ENCODE measurements at regions of chr9 and their contacts with region 1.

Region 1: GRCh38 chr9:36470643-36471290 is 70.7 kb upstream of the RNF38 start:
- DNase-seq: no peak
- ATAC-seq: peak; percentile 88
- H3K4me3 ChIP-seq: peak overlapping the region; percentile 6 to 43; a peak in 3 of 4 replicates
- H3K27ac ChIP-seq: peak overlapping the region; percentile 73
- H3K4me1 ChIP-seq: peaks cover 22% of the 10 kb centered on the region
- H3K27me3 ChIP-seq: no peaks in the 10 kb centered on the region
- CTCF ChIP-seq: no peak

Region 2: DNA sequence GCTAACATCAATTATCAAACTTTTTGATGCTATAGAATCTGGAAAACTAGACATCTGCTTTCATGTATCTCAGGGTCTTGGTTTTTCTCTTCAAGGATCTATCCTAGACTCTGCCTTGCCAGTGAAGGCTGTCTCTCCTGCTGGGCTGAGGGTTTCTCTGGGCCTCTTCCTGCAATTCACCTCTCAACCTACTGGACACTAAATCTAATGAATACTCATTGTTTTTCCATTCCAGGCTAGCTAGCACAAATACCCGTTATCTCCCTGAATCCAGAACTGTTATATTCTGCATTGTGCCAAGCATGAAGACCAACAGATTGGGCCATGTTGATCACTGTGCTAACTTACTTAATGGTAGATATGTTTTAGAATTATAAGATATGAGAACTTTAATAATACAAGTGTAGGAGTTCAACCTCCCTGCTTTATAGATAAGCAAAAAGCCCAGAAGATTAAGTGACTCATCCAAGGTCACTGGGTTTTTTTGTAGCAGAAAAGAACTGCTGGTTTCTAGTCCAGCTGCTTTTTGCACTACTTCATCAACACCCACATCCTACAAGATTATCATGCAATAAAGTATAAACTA is 14.2 kb before region 1 on chr9:
- CTCF ChIA-PET with region 1: no interaction called
- POLR2A ChIA-PET with region 1: interaction called, 13 read pairs
- in situ Hi-C with region 1: no loop called
- intact Hi-C with region 1: no loop called
- DNase-seq: no peak
- ATAC-seq: peak; percentile 54; the same call in 1 of the 2 replicates
- H3K4me3 ChIP-seq: no peak overlapping the region
- H3K27ac ChIP-seq: no peak overlapping the region
- H3K4me1 ChIP-seq: peaks cover 6% of the 10 kb centered on the region
- H3K27me3 ChIP-seq: no peaks in the 10 kb centered on the region
- CTCF ChIP-seq: no peak

Region 3: DNA sequence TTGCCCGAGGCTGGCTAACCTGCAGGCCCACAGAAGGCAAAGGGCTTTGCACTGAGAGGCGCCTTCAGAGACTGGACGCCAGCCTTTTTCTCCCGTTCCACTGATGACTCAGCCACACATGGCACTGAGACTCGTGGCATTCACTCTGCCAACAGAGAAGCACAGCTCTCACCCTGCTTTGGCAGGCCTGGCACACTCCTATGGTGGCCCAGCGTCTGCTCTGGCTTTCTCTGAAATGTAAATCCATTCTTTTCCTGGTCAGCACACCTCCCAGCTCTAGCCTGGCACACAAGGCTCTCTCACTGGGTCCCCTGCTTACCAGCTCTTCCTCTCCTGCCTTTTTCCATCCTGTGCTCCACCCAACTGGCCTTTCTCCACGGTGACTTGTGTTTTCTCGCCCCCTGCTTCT is 96.0 kb after region 1 on chr9:
- CTCF ChIA-PET with region 1: interaction called, 3 read pairs
- POLR2A ChIA-PET with region 1: interaction called, 12 read pairs
- in situ Hi-C with region 1: no loop called
- intact Hi-C with region 1: no loop called
- DNase-seq: no peak
- ATAC-seq: peak; percentile 88
- H3K4me3 ChIP-seq: no peak overlapping the region
- H3K27ac ChIP-seq: peak overlapping the region; percentile 70
- H3K4me1 ChIP-seq: peaks cover 11% of the 10 kb centered on the region
- H3K27me3 ChIP-seq: no peaks in the 10 kb centered on the region
- CTCF ChIP-seq: no peak

Region 4: DNA sequence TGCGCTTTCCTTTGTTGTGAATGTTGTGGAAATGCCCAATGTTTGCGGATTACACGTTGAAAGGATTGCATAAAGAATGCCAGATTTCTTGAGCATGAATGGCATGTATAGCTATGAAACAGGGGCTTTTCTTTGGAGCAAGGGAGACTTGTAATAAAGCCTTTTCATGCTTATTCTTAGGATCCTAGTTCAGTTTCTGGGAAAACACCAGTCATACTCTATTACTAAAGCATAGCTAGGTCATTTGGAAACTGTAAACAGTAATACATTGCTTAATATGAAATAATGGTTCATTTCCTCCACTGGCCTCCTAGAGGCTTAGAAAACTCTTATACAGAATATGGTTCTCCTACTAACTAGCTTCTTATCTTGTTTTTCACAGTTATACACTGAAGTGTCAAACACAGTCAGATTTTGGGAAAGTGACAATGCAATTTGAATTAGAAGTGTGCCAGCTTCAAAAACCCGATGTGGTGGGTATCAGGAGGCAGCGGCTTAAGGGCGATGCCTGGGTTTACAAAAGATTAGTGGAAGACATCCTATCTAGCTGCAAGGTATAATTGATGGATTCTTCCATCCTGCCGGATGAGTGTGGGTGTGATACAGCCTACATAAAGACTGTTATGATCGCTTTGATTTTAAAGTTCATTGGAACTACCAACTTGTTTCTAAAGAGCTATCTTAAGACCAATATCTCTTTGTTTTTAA is 206.2 kb after region 1 on chr9:
- CTCF ChIA-PET with region 1: no interaction called
- POLR2A ChIA-PET with region 1: no interaction called
- in situ Hi-C with region 1: no loop called
- intact Hi-C with region 1: no loop called
- DNase-seq: no peak
- ATAC-seq: no peak; the same call in 1 of the 2 replicates
- H3K4me3 ChIP-seq: no peak overlapping the region
- H3K27ac ChIP-seq: no peak overlapping the region
- H3K4me1 ChIP-seq: no peaks in the 10 kb centered on the region
- H3K27me3 ChIP-seq: no peaks in the 10 kb centered on the region
- CTCF ChIP-seq: no peak

Measured in Panc1 (cell line).